ENCODE measurements at regions of chr5 and their contacts with region 1.

Region 1: DNA sequence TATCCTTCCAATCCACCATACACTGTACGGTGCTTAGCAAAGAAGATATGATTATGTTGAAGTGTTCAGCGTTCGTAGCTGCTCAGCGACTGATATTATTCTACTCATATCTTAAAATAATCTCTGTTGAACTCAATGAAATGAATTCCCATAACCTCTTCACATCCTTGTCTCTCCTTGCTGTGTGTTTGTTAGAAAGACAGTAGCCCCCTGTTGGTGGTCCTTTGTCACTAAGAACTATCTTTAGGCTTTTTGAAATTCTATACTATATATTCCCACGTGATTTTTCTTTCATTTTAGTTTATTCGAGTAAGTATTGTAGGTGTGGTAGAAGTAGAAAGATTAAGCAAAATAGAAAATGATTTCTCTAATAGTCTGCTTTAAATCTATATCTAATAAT is 762.8 kb upstream of the WWC1 start:
- DNase-seq: no peak
- H3K4me3 ChIP-seq: no peak overlapping the region
- H3K27ac ChIP-seq: no peak overlapping the region
- H3K4me1 ChIP-seq: peaks cover 0 to 2% (median 0%) of the 10 kb centered on the region in 4 experiments; a peak in 3 of 7 replicates
- H3K27me3 ChIP-seq: no peaks in the 10 kb centered on the region; a peak in 1 of 7 replicates
- CTCF ChIP-seq: peak in 1 of 3 experiments; percentile 44; a peak in 2 of 4 replicates
- EP300 ChIP-seq: no peak
- POLR2A ChIP-seq: no peak
- RAD21 ChIP-seq: peak; percentile 38 to 40

Region 2: GRCh38 chr5:167478188-167478587 is 50.5 kb before region 1 on chr5:
- CTCF ChIA-PET with region 1: no interaction called
- POLR2A ChIA-PET with region 1: no interaction called
- DNase-seq: no peak
- H3K4me3 ChIP-seq: no peak overlapping the region
- H3K27ac ChIP-seq: no peak overlapping the region
- H3K4me1 ChIP-seq: no peaks in the 10 kb centered on the region
- H3K27me3 ChIP-seq: no peaks in the 10 kb centered on the region
- CTCF ChIP-seq: no peak
- EP300 ChIP-seq: no peak
- POLR2A ChIP-seq: no peak
- RAD21 ChIP-seq: no peak

Region 3: DNA sequence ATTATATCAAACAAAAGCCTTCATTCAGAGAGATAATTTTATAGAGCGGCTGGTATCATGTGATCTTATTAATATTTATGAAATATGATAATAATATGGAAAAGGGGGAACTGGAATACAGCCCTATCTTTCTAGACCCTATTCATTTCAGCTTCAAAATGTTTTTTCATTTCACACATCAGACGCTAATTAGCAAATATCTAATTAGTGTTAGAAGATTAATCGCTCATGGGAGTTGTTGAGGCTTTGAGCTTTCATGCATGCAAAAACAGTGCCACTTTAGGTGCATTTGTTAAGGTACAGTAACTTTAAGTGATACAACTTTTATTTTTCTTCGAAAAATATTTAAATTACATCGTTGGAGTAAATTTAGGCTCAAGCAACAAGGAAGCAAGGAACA is 11.1 kb after region 1 on chr5:
- CTCF ChIA-PET with region 1: interaction called, 22 read pairs
- POLR2A ChIA-PET with region 1: no interaction called
- DNase-seq: no peak
- H3K4me3 ChIP-seq: no peak overlapping the region
- H3K27ac ChIP-seq: no peak overlapping the region
- H3K4me1 ChIP-seq: no peaks in the 10 kb centered on the region
- H3K27me3 ChIP-seq: no peaks in the 10 kb centered on the region
- CTCF ChIP-seq: no peak
- EP300 ChIP-seq: no peak
- POLR2A ChIP-seq: no peak
- RAD21 ChIP-seq: no peak